ENCODE measurements at regions of chr18 and their contacts with region 1.

Region 1: DNA sequence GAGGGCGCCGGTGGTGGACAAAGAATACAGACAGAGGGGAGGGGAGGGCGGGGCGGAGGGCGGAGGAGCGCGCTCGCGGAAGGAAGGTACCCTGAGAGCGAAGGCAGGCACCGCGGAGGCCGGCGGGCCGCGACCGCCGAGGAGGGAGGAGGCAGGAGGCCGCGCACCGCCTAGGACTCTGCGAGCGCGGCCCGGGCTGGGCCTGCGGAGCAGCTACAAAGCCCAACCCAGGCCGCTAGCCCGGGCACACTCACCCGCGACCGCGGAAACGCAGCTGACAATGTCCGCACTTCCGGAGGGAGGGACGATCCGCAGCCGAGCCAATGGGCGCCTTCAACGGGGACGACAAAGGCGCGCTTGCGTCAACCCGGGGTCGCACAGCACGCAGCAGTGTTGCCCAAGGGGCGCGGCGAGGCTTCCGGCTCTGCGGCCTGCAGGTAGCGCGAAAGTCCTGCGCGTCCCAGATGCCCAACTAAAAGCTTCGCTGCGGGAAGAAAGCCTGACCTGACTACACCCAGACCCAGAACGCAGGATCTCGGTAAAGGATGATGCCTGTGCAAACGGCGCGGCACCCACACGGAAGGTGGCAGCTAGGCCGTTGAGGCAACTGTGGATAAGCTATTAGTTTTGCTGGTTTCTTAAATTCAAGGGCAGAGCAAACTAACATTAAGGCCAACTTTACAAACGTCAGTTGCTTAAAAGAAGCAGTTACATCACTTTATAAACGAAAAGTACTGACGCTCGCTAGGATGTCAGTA is at the start of gene C18orf32:
- DNase-seq: peak; percentile 94 to 99 (median 96)
- H3K4me3 ChIP-seq: peak within 1 kb of the TSS; percentile 71 to 97 (median 89)
- H3K27ac ChIP-seq: peak within 1 kb of the TSS; percentile 70 to 98 (median 94)
- H3K27me3 ChIP-seq: no peaks in the 10 kb centered on the region
- CTCF ChIP-seq: peak in 21 of 56 donors; percentile 7 to 40 (median 23)
- total RNA-seq, gene C18orf32: 65.6 to 143 (median 105) TPM

Region 2: DNA sequence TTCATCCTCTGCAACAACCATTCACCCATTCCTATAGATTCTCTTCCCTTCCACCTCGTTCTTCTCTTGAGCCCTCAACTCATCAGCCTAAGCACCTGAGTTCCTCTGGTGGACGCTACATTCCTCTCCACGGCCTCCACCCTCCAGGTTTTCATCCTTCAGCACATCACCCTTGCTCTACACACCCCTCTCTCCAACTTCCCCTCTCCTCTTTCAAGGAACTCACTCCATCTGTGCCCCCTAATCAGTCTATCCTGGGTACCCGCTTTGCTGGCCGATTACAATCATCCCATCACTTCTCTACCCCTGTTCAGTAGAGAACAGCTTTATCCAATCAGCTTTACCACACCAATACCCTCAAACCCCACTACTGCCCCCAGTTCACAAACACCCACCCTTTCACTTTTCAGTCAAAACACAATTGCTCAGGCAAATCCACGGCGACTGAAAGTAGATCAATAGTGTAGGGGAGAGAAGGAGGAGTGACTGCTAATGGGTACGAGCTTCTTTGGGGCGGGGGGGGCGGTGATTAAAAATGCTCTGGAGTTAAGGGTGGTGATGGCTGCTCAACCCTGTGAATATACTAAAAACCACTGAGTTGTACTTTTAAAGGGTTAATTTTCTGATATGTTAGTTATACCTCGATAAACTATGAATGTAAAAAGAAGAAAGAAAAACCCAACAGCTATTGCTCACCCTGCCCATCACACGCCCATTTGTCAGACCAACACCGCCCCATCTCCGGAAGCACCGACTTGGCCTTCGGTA is 27.5 kb before region 1 on chr18:
- intact Hi-C with region 1: loop called in 1 of 2 experiments (anchors 1 kb)
- DNase-seq: no peak
- H3K4me3 ChIP-seq: peak overlapping the region; percentile 70 to 100 (median 94)
- H3K27ac ChIP-seq: peak overlapping the region in 52 of 59 donors; percentile 33 to 94 (median 82)
- H3K27me3 ChIP-seq: no peaks in the 10 kb centered on the region
- CTCF ChIP-seq: no peak

Region 3: DNA sequence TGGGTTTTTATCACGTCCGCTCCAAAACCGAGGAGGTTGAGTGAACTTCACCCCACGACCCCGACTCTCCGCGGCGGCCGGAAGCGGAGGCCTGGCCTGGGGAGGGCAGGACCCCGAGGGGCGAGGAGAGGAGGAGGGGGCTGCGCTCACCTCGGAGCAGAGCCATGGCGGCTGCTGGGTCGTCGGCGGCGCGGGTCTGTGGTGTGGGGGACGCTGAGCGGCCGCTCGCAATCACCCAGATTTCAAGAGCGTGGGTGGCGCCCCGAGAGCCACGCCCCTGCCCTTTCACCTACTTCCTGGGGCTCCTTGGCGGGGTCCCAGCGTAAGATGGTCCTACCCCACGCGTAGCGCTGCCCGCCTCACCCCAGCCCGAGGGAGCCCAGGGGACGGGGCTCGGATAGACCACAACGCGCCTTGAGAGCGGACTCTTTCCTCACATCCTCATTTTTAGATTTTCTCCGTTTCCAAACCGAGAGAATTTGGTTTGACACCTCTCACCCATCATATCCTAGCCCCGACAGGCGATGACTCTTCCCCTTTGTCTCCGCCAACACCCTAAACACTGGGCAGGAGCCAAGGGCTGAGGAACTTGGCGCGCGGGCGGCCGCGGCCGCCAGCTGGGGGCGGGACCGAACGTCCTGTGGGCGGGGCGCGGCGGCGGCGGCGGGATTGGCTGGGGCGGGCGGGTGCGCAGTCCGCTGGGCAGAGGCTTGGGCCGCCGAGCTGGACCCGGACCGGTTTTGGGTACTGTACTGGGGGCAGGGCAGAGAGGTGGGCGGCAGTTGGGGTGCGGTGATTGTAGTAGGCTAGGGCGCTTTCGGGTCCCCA is 326.4 kb after region 1 on chr18 and contains the start of gene ACAA2:
- intact Hi-C with region 1: loop called in 1 of 2 experiments (anchors 2 kb)
- DNase-seq: peak; percentile 74 to 90 (median 83)
- H3K4me3 ChIP-seq: peak within 1 kb of the TSS; percentile 68 to 98 (median 88)
- H3K27ac ChIP-seq: peak within 1 kb of the TSS; percentile 73 to 99 (median 95)
- H3K27me3 ChIP-seq: no peaks in the 10 kb centered on the region
- CTCF ChIP-seq: peak in 10 of 56 donors; percentile 7 to 45 (median 14)
- total RNA-seq, gene ACAA2: 19.4 to 71.0 (median 31.6) TPM

Region 4: GRCh38 chr18:50281295-50281971 is 794.3 kb after region 1 on chr18 and contains the start of gene MBD1:
- intact Hi-C with region 1: loop called (anchors 5 to 10 kb)
- DNase-seq: peak; percentile 95 to 99 (median 98)
- H3K4me3 ChIP-seq: peak within 1 kb of the TSS; percentile 69 to 100 (median 97)
- H3K27ac ChIP-seq: peak within 1 kb of the TSS; percentile 56 to 99 (median 95)
- H3K27me3 ChIP-seq: no peaks in the 10 kb centered on the region
- CTCF ChIP-seq: peak in 47 of 56 donors; percentile 0 to 67 (median 43)
- total RNA-seq, gene MBD1: 72.6 to 117 (median 94.0) TPM

Region 5: GRCh38 chr18:50287441-50288347 is 800.6 kb after region 1 on chr18 and contains the start of gene CXXC1:
- intact Hi-C with region 1: loop called (anchors 5 to 10 kb)
- DNase-seq: peak; percentile 97 to 100 (median 99)
- H3K4me3 ChIP-seq: peak within 1 kb of the TSS; percentile 52 to 98 (median 83)
- H3K27ac ChIP-seq: peak within 1 kb of the TSS; percentile 68 to 98 (median 93)
- H3K27me3 ChIP-seq: no peaks in the 10 kb centered on the region
- CTCF ChIP-seq: peak in 52 of 56 donors; percentile 25 to 70 (median 53)
- total RNA-seq, gene CXXC1: 39.4 to 103 (median 69.4) TPM

Measured in dorsolateral prefrontal cortex (tissue), 120 donors.